HepG2 (cell line): ENCODE measurements at regions of chr4 and their contacts with region 1.

Region 1: DNA sequence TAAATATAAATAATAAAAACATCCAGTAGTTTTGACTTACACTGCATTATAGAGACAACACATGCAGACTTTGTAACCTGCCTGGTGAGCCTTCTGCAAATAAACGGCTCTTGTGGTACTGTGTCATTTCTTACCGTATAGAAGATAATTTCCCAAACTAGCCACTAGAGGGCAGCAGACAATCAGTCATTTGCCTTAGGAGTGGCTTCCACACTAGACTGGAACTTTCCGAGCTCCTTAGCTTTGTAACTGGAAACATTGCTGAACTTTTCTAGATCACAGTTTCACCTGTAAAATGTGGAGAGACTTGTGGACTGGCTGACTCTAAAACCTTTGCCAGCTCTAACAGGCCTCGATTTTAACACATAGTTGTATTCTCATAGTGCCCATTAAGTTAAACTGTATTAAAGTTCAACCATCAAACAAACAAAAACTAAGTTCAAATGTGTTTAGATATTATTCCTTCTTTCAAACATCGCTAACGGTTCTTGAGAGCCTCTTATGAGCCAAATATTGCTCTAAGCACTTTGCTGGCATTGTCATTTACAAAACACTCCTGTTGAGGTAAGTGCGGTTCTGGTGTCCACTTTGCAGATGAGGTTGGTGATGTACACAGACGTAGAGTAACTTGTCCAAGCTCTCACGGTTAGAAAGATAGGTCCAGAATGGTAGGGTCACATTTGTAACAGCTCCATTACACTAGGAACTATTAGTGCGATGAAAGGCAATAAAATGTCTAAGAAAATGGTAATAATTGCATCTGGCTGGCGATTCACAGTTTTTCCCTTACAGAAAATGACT is 345.5 kb downstream of the ANK2 start:
- DNase-seq: peak; percentile 88
- ATAC-seq: peak; percentile 93
- H3K4me3 ChIP-seq: peak overlapping the region in 1 of 3 experiments; percentile 12; a peak in 1 of 6 replicates
- H3K27ac ChIP-seq: no peak overlapping the region
- H3K4me1 ChIP-seq: peaks cover 38% of the 10 kb centered on the region
- H3K27me3 ChIP-seq: no peaks in the 10 kb centered on the region
- CTCF ChIP-seq: peak; percentile 89
- EP300 ChIP-seq: peak in 1 of 2 experiments; percentile 31; a peak in 1 of 4 replicates
- POLR2A ChIP-seq: no peak
- RAD21 ChIP-seq: peak; percentile 81

Region 2: GRCh38 chr4:113483131-113483530 is 88.2 kb after region 1 on chr4:
- CTCF ChIA-PET with region 1: no interaction called
- POLR2A ChIA-PET with region 1: no interaction called
- in situ Hi-C with region 1: no loop called
- intact Hi-C with region 1: no loop called
- DNase-seq: no peak
- ATAC-seq: no peak
- H3K4me3 ChIP-seq: no peak overlapping the region
- H3K27ac ChIP-seq: no peak overlapping the region
- H3K4me1 ChIP-seq: no peaks in the 10 kb centered on the region
- H3K27me3 ChIP-seq: no peaks in the 10 kb centered on the region
- CTCF ChIP-seq: no peak
- EP300 ChIP-seq: no peak
- POLR2A ChIP-seq: no peak
- RAD21 ChIP-seq: no peak

Region 3: DNA sequence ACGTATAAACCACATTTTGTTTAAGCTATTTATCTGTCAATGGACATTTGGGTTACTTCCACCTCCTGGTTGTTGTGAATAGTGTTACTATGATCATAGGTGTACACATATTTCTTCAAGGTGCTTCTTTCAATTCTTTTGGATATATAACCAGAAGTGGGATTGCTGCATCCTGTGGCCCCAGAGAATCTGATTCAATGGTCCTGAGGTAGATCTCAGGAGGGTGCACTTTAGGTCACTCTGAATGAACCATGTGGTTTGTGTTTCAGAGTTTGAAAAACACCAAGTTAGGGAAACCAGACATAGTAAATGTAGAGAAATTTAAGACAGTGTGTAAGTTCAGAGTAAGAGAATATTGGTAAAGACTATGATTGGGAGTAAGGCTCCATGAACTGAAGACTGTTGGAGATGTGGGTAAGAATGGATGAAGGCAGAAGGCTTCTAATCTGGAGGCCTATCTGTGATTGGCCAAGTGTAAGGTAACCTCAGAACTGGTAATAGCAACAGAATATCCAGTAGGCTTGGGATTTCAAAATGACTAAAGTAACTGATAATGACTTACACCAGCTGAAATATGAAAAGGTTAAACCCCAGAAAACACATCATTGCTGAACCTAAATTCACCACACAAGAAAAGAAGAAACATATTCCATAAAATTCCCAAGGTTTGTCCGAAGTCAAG is 129.7 kb after region 1 on chr4:
- CTCF ChIA-PET with region 1: no interaction called
- POLR2A ChIA-PET with region 1: no interaction called
- in situ Hi-C with region 1: no loop called
- intact Hi-C with region 1: loop called (anchors 5 kb)
- DNase-seq: no peak
- ATAC-seq: no peak
- H3K4me3 ChIP-seq: no peak overlapping the region
- H3K27ac ChIP-seq: no peak overlapping the region
- H3K4me1 ChIP-seq: no peaks in the 10 kb centered on the region
- H3K27me3 ChIP-seq: no peaks in the 10 kb centered on the region
- CTCF ChIP-seq: no peak
- EP300 ChIP-seq: no peak
- POLR2A ChIP-seq: no peak
- RAD21 ChIP-seq: no peak

Region 4: DNA sequence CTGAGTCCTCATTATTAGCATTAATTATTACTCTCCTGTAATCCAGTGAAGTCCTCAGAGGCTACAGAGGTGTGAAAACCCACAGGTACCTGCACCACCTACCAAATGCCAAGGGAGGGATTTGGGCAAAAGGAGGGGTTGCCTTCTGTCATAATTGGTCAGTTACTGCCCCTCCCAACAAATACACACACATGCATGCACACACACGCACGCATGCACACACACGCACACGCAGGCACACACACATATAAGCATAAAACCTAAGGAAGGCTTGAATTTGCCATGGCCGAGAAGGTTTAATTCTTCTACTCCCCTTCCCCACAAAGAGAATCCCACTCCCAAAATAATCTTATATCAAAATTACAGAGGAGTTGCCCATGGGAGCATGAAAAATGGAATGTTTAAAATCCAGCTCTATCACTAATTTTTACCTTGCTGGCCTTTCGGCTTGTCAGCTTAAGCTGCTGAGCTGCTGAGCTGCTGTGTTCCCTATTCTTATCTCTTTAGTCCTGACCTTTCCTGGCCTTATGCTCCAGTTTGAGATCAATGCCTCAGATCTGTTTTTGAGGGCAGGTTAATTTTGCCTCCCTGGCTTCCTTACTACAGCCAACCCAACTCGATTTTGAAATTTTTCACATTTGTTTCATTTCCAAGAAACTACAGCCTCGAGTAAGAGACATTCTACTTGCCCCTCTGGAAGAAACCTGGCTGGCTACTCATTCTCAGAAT is 271.6 kb after region 1 on chr4:
- CTCF ChIA-PET with region 1: no interaction called
- POLR2A ChIA-PET with region 1: no interaction called
- in situ Hi-C with region 1: no loop called
- intact Hi-C with region 1: loop called (anchors 10 kb)
- DNase-seq: no peak
- ATAC-seq: peak; percentile 67
- H3K4me3 ChIP-seq: no peak overlapping the region
- H3K27ac ChIP-seq: no peak overlapping the region
- H3K4me1 ChIP-seq: peaks cover 10% of the 10 kb centered on the region
- H3K27me3 ChIP-seq: no peaks in the 10 kb centered on the region
- CTCF ChIP-seq: no peak
- EP300 ChIP-seq: no peak
- POLR2A ChIP-seq: no peak
- RAD21 ChIP-seq: no peak

Region 5: DNA sequence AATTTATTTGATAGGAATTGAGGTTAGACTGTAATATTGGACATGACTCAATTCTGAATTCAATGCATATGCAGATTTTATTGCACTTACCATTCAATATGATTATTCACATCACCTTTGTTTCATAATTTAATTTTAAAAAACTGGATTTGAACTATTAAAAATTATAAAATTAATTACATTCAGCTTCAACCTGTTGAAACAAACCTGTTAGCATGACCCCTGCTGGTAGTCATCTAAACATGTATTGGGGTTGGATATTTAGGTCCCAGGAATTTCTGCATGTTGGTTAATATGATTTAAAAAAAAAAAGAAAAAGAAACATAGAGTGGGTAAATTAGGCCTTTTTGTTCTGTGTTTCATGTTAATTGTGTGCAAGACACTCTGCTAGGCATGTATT is 498.6 kb after region 1 on chr4:
- CTCF ChIA-PET with region 1: interaction called, 13 read pairs
- POLR2A ChIA-PET with region 1: no interaction called
- in situ Hi-C with region 1: loop called (anchors 10 kb)
- intact Hi-C with region 1: loop called (anchors 1 kb)
- DNase-seq: peak; percentile 14
- ATAC-seq: no peak
- H3K4me3 ChIP-seq: no peak overlapping the region
- H3K27ac ChIP-seq: no peak overlapping the region
- H3K4me1 ChIP-seq: no peaks in the 10 kb centered on the region
- H3K27me3 ChIP-seq: no peaks in the 10 kb centered on the region; a peak in 1 of 5 replicates
- CTCF ChIP-seq: no peak
- EP300 ChIP-seq: no peak
- POLR2A ChIP-seq: no peak
- RAD21 ChIP-seq: no peak

Region 6: GRCh38 chr4:113908829-113909228 is 513.9 kb after region 1 on chr4:
- CTCF ChIA-PET with region 1: no interaction called
- POLR2A ChIA-PET with region 1: no interaction called
- in situ Hi-C with region 1: no loop called
- intact Hi-C with region 1: loop called (anchors 5 kb)
- DNase-seq: no peak
- ATAC-seq: no peak
- H3K4me3 ChIP-seq: no peak overlapping the region
- H3K27ac ChIP-seq: no peak overlapping the region
- H3K4me1 ChIP-seq: no peaks in the 10 kb centered on the region
- H3K27me3 ChIP-seq: no peaks in the 10 kb centered on the region
- CTCF ChIP-seq: peak; percentile 14; the same call in 1 of the 2 replicates
- EP300 ChIP-seq: no peak
- POLR2A ChIP-seq: no peak
- RAD21 ChIP-seq: no peak

Region 7: GRCh38 chr4:114180481-114180880 is 785.6 kb after region 1 on chr4:
- CTCF ChIA-PET with region 1: no interaction called
- POLR2A ChIA-PET with region 1: no interaction called
- in situ Hi-C with region 1: no loop called
- intact Hi-C with region 1: loop called (anchors 10 kb)
- DNase-seq: peak; percentile 25
- ATAC-seq: peak; percentile 95
- H3K4me3 ChIP-seq: no peak overlapping the region
- H3K27ac ChIP-seq: no peak overlapping the region
- H3K4me1 ChIP-seq: no peaks in the 10 kb centered on the region
- H3K27me3 ChIP-seq: no peaks in the 10 kb centered on the region
- CTCF ChIP-seq: peak; percentile 69
- EP300 ChIP-seq: no peak
- POLR2A ChIP-seq: no peak
- RAD21 ChIP-seq: peak; percentile 53